Activated B cell treated with CpG ODN at 0.5 μM for 24 hours (primary cell): ENCODE measurements at regions of chr11 and their contacts with region 1.

Region 1: DNA sequence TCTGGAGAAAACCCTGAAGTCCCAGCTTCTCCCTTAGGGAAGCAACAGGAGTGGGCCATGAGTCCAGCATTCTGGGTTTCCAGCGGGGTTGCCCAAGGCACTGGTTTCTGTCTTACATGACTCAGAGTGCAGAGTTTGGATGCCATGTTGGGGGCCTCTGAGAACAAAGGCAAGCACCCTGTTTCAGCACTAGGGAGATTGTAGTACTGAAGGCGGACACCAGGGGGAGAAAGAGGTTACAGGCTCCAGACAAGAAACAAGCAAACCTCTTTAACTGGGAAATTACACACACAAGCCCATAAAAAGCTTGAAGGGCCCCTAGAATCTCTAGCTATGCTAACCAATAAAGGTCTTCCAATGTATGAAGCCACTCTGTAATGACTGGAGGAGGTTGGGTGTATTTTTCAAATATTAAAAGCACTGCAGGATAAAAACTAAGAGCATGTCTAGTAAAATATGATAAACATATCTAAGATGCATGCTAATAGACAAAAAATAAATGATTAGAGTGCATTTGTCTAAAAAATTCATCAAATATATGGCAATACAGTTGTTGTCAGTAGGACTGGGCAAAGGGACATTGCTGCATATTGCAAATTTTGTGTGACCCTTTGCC is 7.1 kb downstream of the MS4A6E start:
- DNase-seq: peak; percentile 49
- ATAC-seq: peak; percentile 92
- H3K4me3 Mint-ChIP-seq: no peak overlapping the region
- H3K27ac Mint-ChIP-seq: no peak overlapping the region
- H3K4me1 Mint-ChIP-seq: peaks cover 20% of the 10 kb centered on the region
- H3K27me3 Mint-ChIP-seq: no peaks in the 10 kb centered on the region
- CTCF ChIP-seq: no peak

Region 2: GRCh38 chr11:60615497-60615896 is 281.4 kb after region 1 on chr11:
- CTCF ChIA-PET with region 1: interaction called, 22 read pairs
- POLR2A ChIA-PET with region 1: no interaction called
- intact Hi-C with region 1: loop called (anchors 1 kb)
- DNase-seq: no peak
- ATAC-seq: no peak
- H3K4me3 Mint-ChIP-seq: no peak overlapping the region
- H3K27ac Mint-ChIP-seq: no peak overlapping the region
- H3K4me1 Mint-ChIP-seq: peaks cover 10% of the 10 kb centered on the region
- H3K27me3 Mint-ChIP-seq: peaks cover 9% of the 10 kb centered on the region
- CTCF ChIP-seq: no peak

Region 3: DNA sequence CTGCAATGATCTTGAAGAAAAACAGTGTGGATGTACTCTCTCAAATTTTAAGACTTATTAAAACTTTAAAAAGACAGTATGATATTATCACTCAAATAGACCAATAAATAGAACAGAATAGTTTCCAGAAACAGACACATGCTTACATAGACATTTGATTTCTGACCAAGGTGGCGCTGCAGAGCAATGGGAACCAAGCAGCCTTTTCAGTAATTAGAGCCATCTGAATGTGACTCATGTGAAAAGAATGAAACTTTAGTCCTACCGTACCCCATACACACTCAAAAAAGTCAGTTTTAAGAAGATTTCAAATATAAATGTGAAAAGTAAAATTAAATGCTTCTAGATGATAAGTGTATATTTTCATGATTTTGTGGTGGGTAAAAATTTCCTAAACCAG is 291.1 kb after region 1 on chr11:
- CTCF ChIA-PET with region 1: interaction called, 22 read pairs
- POLR2A ChIA-PET with region 1: no interaction called
- intact Hi-C with region 1: loop called (anchors 5 kb)
- DNase-seq: no peak
- ATAC-seq: peak; percentile 47
- H3K4me3 Mint-ChIP-seq: no peak overlapping the region
- H3K27ac Mint-ChIP-seq: no peak overlapping the region
- H3K4me1 Mint-ChIP-seq: peaks cover 14% of the 10 kb centered on the region
- H3K27me3 Mint-ChIP-seq: no peaks in the 10 kb centered on the region
- CTCF ChIP-seq: no peak